GM13976 (cell line): ENCODE measurements at regions of chr14 and their contacts with region 1.

Region 1: GRCh38 chr14:50099335-50099734 is 17.0 kb downstream of the VCPKMT start:
- DNase-seq: no peak
- CTCF ChIP-seq: no peak

Region 2: GRCh38 chr14:49867831-49868723 is 231.3 kb before region 1 on chr14:
- in situ Hi-C with region 1: loop called (anchors 10 kb)
- DNase-seq: peak; percentile 96
- CTCF ChIP-seq: no peak

Region 3: GRCh38 chr14:50383618-50384225 is 284.4 kb after region 1 on chr14:
- in situ Hi-C with region 1: no loop called
- DNase-seq: no peak
- CTCF ChIP-seq: no peak